Mucosa of descending colon (tissue), 3 donors: ENCODE measurements at regions of chr3 and their contacts with region 1.

Region 1: DNA sequence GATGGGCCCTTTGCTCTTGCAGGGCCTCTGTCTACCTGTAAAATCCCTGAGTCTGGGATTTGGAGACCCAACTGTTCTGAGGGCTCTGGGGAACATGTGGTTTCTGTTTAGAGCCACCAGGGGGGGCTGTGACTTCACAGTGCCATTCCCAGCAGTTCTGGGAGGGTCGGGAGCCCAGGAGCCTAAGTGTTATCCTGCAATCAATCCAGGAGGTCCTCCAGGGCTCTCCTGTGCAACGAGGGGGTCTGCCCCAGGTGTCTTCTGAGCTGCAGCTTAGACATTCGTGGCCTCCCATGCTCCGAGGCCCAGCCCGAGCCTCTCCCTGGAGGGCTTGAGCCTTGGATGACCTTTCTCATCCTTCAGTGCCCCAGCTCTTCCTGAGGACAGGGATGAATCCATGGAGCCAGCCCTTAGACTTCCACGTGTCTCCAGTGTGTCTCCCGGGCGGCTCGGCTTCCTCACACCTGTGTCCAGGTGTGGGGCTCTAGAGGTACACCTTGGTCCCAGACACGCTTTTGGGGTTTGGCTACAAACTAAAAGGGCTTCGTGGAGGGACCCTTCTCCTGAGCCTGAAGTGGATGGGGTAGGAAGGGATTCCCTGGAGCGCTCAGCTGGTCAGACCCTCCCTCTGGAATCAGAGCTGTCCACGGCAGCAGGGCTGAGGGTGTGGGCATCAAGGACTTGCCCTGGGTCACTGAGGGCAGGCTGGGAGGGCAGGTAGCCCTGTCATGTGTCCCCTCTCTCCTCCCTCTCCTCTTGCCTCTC is 20.3 kb upstream of the ABTB1 start:
- DNase-seq: peak in 2 of 3 donors; percentile 45 to 56
- ATAC-seq: peak; percentile 79
- H3K4me3 ChIP-seq: no peak overlapping the region
- H3K4me1 ChIP-seq: no peaks in the 10 kb centered on the region
- CTCF ChIP-seq: peak; percentile 66

Region 2: GRCh38 chr3:127455541-127456450 is 196.6 kb before region 1 on chr3:
- intact Hi-C with region 1: no loop called
- DNase-seq: peak; percentile 63 to 83 (median 78)
- ATAC-seq: peak; percentile 90
- H3K4me3 ChIP-seq: no peak overlapping the region
- H3K4me1 ChIP-seq: peaks cover 16% of the 10 kb centered on the region
- CTCF ChIP-seq: peak; percentile 87

Region 3: DNA sequence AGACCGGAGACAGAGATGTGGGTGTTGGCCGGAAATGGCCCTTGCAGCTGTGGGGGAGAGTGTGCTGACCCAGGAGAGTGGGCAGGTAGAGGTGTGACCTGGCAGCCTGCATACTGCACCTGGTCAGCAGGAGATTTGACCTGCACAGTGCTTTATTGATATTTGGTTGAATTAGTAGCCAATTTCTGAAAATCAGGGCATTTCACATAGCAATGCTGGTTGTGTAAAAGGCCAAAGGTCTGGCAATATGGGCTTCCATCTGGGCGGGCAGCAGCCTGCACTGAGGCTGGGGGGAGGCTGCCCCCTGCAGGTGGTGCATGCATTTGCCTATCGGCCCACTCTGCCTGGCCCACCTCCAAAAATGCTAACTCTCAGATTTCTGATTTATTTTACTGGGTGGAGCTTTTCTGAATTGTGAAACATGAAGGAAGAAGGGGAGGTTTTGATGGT is 179.3 kb after region 1 on chr3:
- intact Hi-C with region 1: loop called (anchors 5 kb)
- DNase-seq: peak; percentile 70 to 82 (median 77)
- ATAC-seq: peak; percentile 95
- H3K4me3 ChIP-seq: no peak overlapping the region
- H3K4me1 ChIP-seq: no peaks in the 10 kb centered on the region
- CTCF ChIP-seq: peak; percentile 65

Region 4: GRCh38 chr3:127959846-127960245 is 307.4 kb after region 1 on chr3:
- intact Hi-C with region 1: loop called in 1 of 2 experiments (anchors 5 kb)
- DNase-seq: peak in 1 of 3 donors; percentile 38
- ATAC-seq: peak; percentile 27
- H3K4me3 ChIP-seq: no peak overlapping the region
- H3K4me1 ChIP-seq: no peaks in the 10 kb centered on the region
- CTCF ChIP-seq: no peak